Mammary epithelial cell (primary cell): ENCODE measurements at regions of chr4 and their contacts with region 1.

Region 1: GRCh38 chr4:89836897-89837384 is at the start of gene SNCA:
- DNase-seq: peak; percentile 81
- H3K4me3 ChIP-seq: peak within 1 kb of the TSS; percentile 72 to 91 (median 78)
- H3K27ac ChIP-seq: peak within 1 kb of the TSS; percentile 53
- H3K4me1 ChIP-seq: peaks cover 9% of the 10 kb centered on the region
- H3K27me3 ChIP-seq: no peaks in the 10 kb centered on the region
- CTCF ChIP-seq: no peak
- total RNA-seq, gene SNCA: 53.8 to 62.4 TPM

Region 2: DNA sequence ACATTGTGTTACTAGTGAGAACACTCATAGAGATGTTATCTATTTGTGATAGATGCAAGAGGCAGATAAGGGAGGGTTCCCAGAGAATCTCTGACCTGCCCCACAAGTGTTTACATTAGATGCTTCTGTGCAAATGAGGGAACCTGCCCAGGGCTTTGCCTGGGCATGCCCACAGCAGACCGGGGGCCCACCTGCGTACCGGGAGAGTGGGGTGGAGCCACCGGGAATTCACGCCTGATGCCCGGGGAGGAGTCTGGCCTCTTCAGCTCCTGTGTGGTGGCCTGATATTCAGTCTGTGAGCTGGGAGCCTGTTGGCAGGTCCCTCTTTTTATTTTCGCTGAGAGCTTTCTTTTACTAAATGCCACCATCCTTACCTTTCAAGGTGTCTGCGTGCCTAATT is 155.7 kb before region 1 on chr4:
- CTCF ChIA-PET with region 1: no interaction called
- dilution Hi-C with region 1: no loop called
- in situ Hi-C with region 1: no loop called
- intact Hi-C with region 1: loop called (anchors 5 kb)
- DNase-seq: peak; percentile 94
- H3K4me3 ChIP-seq: peak overlapping the region; percentile 57 to 97 (median 91)
- H3K27ac ChIP-seq: peak overlapping the region; percentile 85
- H3K4me1 ChIP-seq: peaks cover 10% of the 10 kb centered on the region
- H3K27me3 ChIP-seq: no peaks in the 10 kb centered on the region
- CTCF ChIP-seq: no peak

Region 3: GRCh38 chr4:89724716-89725115 is 112.2 kb before region 1 on chr4:
- CTCF ChIA-PET with region 1: no interaction called
- dilution Hi-C with region 1: no loop called
- in situ Hi-C with region 1: no loop called
- intact Hi-C with region 1: loop called (anchors 2 kb)
- DNase-seq: peak; percentile 39
- H3K4me3 ChIP-seq: no peak overlapping the region
- H3K27ac ChIP-seq: no peak overlapping the region
- H3K4me1 ChIP-seq: no peaks in the 10 kb centered on the region
- H3K27me3 ChIP-seq: no peaks in the 10 kb centered on the region
- CTCF ChIP-seq: no peak

Region 4: GRCh38 chr4:89752932-89753581 is 83.9 kb before region 1 on chr4:
- CTCF ChIA-PET with region 1: no interaction called
- dilution Hi-C with region 1: no loop called
- in situ Hi-C with region 1: no loop called
- intact Hi-C with region 1: loop called (anchors 1 kb)
- DNase-seq: peak; percentile 45
- H3K4me3 ChIP-seq: peak overlapping the region in 1 of 3 experiments; percentile 10
- H3K27ac ChIP-seq: peak overlapping the region; percentile 92
- H3K4me1 ChIP-seq: peaks cover 17% of the 10 kb centered on the region
- H3K27me3 ChIP-seq: no peaks in the 10 kb centered on the region
- CTCF ChIP-seq: no peak

Region 5: DNA sequence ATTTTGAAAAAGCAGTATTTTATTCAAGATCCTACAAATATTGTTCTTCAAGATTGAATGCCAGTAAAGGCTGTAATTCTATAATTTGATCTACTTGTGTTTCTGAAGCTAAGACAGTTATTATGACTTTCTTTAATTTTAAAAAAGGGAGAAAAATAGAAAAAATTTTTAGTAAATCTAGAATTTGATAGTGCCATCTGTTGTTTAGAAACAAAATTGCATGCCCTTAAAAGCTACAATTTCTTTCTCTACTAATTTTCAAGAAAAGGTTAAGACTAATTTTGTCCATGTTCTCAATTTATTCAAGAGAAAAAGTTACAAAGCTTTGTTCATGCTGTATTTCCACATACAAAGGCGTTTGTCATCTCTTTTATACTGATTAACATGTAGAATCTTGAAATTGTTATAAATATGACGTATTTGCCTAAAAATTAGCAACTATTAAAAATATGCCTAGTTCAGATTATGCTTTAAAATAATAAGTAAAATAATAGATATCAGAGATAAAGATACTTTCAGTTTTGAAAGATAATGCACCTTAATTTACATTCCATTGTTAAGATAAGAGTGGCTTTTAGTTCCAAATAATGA is 32.2 kb after region 1 on chr4:
- CTCF ChIA-PET with region 1: no interaction called
- dilution Hi-C with region 1: no loop called
- in situ Hi-C with region 1: no loop called
- intact Hi-C with region 1: loop called (anchors 1 kb)
- DNase-seq: no peak
- H3K4me3 ChIP-seq: no peak overlapping the region
- H3K27ac ChIP-seq: no peak overlapping the region
- H3K4me1 ChIP-seq: no peaks in the 10 kb centered on the region
- H3K27me3 ChIP-seq: no peaks in the 10 kb centered on the region
- CTCF ChIP-seq: peak; percentile 53 to 54